ENCODE measurements at regions of chr19 and their contacts with region 1.

Region 1: GRCh38 chr19:41872775-41873647 is 4.1 kb upstream of the CD79A start:
- DNase-seq: peak; percentile 49 to 79 (median 57)
- H3K4me3 ChIP-seq: no peak overlapping the region
- H3K4me3 Mint-ChIP-seq: peak overlapping the region; percentile 35 to 81 (median 64)
- H3K27ac ChIP-seq: no peak overlapping the region
- H3K27ac Mint-ChIP-seq: peak overlapping the region; percentile 80 to 99 (median 98)
- H3K4me1 ChIP-seq: peaks cover 100% of the 10 kb centered on the region
- H3K4me1 Mint-ChIP-seq: peaks cover 68 to 91% (median 79%) of the 10 kb centered on the region in 3 donors
- H3K27me3 ChIP-seq: no peaks in the 10 kb centered on the region
- H3K27me3 Mint-ChIP-seq: no peaks in the 10 kb centered on the region

Region 2: DNA sequence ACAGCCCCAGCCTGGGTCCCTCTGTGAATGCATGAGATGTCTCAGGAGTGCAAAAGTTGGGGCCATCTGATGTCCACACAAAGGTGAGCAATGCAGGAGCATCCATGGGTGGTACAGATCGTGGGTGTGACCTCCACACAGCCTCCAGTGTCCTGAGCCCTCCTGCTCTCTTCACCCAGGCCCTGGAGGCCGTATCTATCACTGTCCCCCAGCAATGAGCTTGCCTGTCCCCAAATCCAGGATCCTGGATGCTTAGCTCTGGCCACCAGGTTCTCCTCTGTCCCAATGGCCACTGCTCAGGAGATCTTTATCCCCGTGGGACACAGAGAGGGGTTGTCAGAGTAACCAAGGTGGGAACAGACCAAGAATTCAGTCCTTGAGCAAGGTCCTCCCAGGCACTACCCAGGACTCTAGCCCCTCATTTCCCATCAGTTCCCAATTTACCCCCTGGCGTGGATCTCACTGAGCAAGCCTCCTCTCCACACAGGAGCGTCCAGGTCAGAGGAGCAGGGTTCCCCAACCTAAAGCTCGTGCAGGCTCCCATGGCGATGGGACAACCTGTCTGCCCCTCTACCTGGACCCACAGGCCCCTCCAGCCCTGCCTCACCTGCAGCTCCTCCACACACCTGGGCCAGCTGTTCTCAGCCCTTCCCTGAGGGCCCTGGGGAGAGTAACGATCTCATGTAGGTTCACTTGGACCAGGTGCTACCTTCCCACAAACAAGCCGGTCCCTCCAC is 285.7 kb before region 1 on chr19:
- CTCF ChIA-PET with region 1: no interaction called
- POLR2A ChIA-PET with region 1: no interaction called
- DNase-seq: no peak
- H3K4me3 ChIP-seq: no peak overlapping the region
- H3K4me3 Mint-ChIP-seq: no peak overlapping the region
- H3K27ac ChIP-seq: no peak overlapping the region
- H3K27ac Mint-ChIP-seq: peak overlapping the region in 1 of 8 donors; percentile 69
- H3K4me1 ChIP-seq: no peaks in the 10 kb centered on the region
- H3K4me1 Mint-ChIP-seq: no peaks in the 10 kb centered on the region
- H3K27me3 ChIP-seq: no peaks in the 10 kb centered on the region
- H3K27me3 Mint-ChIP-seq: peaks cover 1 to 2% of the 10 kb centered on the region in 2 donors

Region 3: GRCh38 chr19:41883821-41884733 is 11.1 kb after region 1 on chr19:
- CTCF ChIA-PET with region 1: interaction called, 227 read pairs
- POLR2A ChIA-PET with region 1: interaction called, 190 read pairs
- DNase-seq: peak; percentile 72 to 91 (median 83)
- H3K4me3 ChIP-seq: peak overlapping the region; percentile 100
- H3K4me3 Mint-ChIP-seq: peak overlapping the region; percentile 85 to 99 (median 94)
- H3K27ac ChIP-seq: peak overlapping the region; percentile 90
- H3K27ac Mint-ChIP-seq: peak overlapping the region; percentile 91 to 98 (median 97)
- H3K4me1 ChIP-seq: peaks cover 62% of the 10 kb centered on the region
- H3K4me1 Mint-ChIP-seq: peaks cover 54 to 65% (median 57%) of the 10 kb centered on the region in 3 donors
- H3K27me3 ChIP-seq: no peaks in the 10 kb centered on the region
- H3K27me3 Mint-ChIP-seq: peaks cover 0 to 2% of the 10 kb centered on the region in 2 donors

Region 4: GRCh38 chr19:41912899-41913537 is 40.0 kb after region 1 on chr19:
- CTCF ChIA-PET with region 1: interaction called, 8 read pairs
- POLR2A ChIA-PET with region 1: interaction called, 16 read pairs
- DNase-seq: no peak
- H3K4me3 ChIP-seq: no peak overlapping the region
- H3K4me3 Mint-ChIP-seq: peak overlapping the region in 3 of 7 donors; percentile 45 to 81 (median 50)
- H3K27ac ChIP-seq: no peak overlapping the region
- H3K27ac Mint-ChIP-seq: no peak overlapping the region
- H3K4me1 ChIP-seq: peaks cover 55% of the 10 kb centered on the region
- H3K4me1 Mint-ChIP-seq: peaks cover 35 to 55% (median 37%) of the 10 kb centered on the region in 3 donors
- H3K27me3 ChIP-seq: peaks cover 36% of the 10 kb centered on the region
- H3K27me3 Mint-ChIP-seq: peaks cover 8 to 19% of the 10 kb centered on the region in 2 donors

Region 5: DNA sequence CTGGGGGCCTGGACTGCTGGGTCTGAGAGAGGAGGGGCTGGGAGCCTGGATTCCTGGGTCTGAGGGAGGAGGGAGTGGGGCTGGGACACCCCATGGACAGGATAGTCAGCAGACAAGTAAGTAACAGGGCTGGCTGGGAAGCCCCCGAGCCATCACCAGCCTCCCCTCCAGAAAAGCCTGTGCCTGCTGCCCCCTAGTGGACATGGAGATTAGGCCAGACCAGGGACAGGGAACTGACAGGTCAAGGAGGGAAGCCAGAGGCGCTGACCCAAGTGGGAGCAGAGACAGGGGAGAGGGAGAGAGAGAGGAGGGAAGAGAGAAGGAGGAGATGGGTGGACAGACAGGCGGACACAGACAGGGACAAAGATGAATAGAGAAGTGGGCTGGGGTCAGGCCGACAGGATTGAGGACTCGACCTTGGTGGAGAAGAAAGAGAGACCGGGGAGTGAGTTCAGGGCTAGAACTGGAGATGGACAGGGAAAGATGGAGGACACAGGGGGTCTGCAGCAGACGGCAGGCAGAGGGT is 61.9 kb after region 1 on chr19:
- CTCF ChIA-PET with region 1: interaction called, 30 read pairs
- POLR2A ChIA-PET with region 1: interaction called, 3 read pairs
- DNase-seq: peak; percentile 60 to 85 (median 71)
- H3K4me3 ChIP-seq: no peak overlapping the region
- H3K4me3 Mint-ChIP-seq: peak overlapping the region in 4 of 7 donors; percentile 4 to 48 (median 15)
- H3K27ac ChIP-seq: no peak overlapping the region
- H3K27ac Mint-ChIP-seq: peak overlapping the region; percentile 41 to 95 (median 88)
- H3K4me1 ChIP-seq: peaks cover 48% of the 10 kb centered on the region
- H3K4me1 Mint-ChIP-seq: peaks cover 44 to 59% (median 44%) of the 10 kb centered on the region in 3 donors
- H3K27me3 ChIP-seq: peaks cover 8% of the 10 kb centered on the region
- H3K27me3 Mint-ChIP-seq: peaks cover 7 to 11% of the 10 kb centered on the region in 2 donors

Region 6: DNA sequence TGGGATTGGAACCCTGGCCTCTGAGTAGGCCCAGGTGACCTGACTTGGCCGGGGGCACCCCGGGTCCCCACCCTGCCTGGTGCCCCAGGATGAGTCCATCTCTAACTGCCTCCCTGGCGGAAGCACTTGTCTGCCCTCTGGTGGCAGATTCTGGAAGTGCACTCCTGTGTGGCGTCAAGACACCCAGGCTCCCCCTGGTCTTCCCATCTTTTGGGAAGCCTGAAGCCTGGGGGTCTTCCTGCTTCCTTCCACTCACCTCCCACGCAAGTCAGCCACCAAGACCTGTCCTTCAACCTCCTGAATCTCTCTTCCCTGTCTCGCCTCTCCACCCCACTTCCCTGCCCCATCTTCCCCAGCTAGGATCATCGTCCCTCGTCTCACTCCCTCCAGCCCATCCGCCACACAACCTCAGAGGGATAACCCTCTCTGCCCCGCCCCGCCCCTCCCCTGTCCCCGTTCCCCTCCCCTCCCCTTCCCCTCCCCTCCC is 78.7 kb after region 1 on chr19:
- CTCF ChIA-PET with region 1: interaction called, 57 read pairs
- POLR2A ChIA-PET with region 1: interaction called, 19 read pairs
- DNase-seq: peak; percentile 72 to 90 (median 84)
- H3K4me3 ChIP-seq: no peak overlapping the region
- H3K4me3 Mint-ChIP-seq: peak overlapping the region in 3 of 7 donors; percentile 23 to 48 (median 37)
- H3K27ac ChIP-seq: no peak overlapping the region
- H3K27ac Mint-ChIP-seq: peak overlapping the region in 7 of 8 donors; percentile 43 to 93 (median 84)
- H3K4me1 ChIP-seq: peaks cover 16% of the 10 kb centered on the region
- H3K4me1 Mint-ChIP-seq: peaks cover 21 to 39% (median 29%) of the 10 kb centered on the region in 3 donors
- H3K27me3 ChIP-seq: no peaks in the 10 kb centered on the region
- H3K27me3 Mint-ChIP-seq: peaks cover 0 to 4% of the 10 kb centered on the region in 2 donors

Measured in CD8-positive, alpha-beta memory T cell (primary cell).